ENCODE measurements at regions of chr4 and their contacts with region 1.

Region 1: DNA sequence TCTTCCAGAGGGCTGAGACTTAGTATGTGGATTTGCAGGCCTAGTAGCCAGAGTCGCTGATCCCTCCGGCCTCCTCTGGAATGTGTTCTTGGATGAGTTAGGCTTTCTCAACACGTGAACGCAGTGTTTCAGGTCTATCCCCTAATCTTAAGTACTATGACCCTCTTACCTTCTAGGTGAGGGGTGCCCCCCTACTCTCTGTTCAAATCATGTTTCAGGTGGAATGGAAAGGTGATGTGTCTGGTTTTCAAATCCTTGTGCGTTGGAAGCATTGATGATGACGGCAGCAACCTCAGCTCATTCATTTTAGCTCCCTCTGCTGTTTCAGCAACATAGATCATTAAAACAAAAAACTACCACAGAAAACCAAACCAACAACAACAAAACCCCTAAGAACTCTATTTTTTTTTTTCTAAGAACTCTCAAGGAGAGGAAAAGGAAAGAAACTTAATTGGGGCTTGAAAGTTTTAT is 56.4 kb downstream of the RWDD4 start:
- DNase-seq: no peak
- H3K4me3 Mint-ChIP-seq: no peak overlapping the region
- H3K27ac Mint-ChIP-seq: no peak overlapping the region
- H3K4me1 Mint-ChIP-seq: no peaks in the 10 kb centered on the region
- H3K27me3 Mint-ChIP-seq: peaks cover 4% of the 10 kb centered on the region

Region 2: DNA sequence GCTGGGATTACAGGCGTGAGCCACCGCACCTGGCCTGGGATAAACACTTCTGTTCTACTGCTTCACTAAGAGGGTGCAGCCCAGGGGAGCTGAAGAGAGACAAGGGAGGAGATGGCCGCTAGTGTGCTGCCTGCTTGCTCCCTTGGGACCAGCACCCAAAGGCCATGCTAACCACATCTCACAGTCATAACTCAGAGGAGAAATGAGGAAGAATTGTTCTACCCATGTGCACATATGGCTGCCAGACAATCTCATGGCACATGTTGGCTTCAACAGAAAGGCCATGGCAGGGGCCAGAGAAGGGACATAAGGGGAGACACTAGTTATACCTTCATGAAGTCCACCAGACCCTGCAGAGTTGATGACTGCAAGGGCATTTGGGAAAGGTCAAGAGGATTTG is 304.9 kb before region 1 on chr4:
- CTCF ChIA-PET with region 1: no interaction called
- POLR2A ChIA-PET with region 1: no interaction called
- DNase-seq: no peak
- H3K4me3 Mint-ChIP-seq: no peak overlapping the region
- H3K27ac Mint-ChIP-seq: no peak overlapping the region
- H3K4me1 Mint-ChIP-seq: peaks cover 9% of the 10 kb centered on the region
- H3K27me3 Mint-ChIP-seq: no peaks in the 10 kb centered on the region

Region 3: GRCh38 chr4:183469936-183470335 is 132.7 kb before region 1 on chr4:
- CTCF ChIA-PET with region 1: interaction called, 12 read pairs
- POLR2A ChIA-PET with region 1: no interaction called
- DNase-seq: no peak
- H3K4me3 Mint-ChIP-seq: no peak overlapping the region
- H3K27ac Mint-ChIP-seq: no peak overlapping the region
- H3K4me1 Mint-ChIP-seq: no peaks in the 10 kb centered on the region
- H3K27me3 Mint-ChIP-seq: no peaks in the 10 kb centered on the region

Region 4: DNA sequence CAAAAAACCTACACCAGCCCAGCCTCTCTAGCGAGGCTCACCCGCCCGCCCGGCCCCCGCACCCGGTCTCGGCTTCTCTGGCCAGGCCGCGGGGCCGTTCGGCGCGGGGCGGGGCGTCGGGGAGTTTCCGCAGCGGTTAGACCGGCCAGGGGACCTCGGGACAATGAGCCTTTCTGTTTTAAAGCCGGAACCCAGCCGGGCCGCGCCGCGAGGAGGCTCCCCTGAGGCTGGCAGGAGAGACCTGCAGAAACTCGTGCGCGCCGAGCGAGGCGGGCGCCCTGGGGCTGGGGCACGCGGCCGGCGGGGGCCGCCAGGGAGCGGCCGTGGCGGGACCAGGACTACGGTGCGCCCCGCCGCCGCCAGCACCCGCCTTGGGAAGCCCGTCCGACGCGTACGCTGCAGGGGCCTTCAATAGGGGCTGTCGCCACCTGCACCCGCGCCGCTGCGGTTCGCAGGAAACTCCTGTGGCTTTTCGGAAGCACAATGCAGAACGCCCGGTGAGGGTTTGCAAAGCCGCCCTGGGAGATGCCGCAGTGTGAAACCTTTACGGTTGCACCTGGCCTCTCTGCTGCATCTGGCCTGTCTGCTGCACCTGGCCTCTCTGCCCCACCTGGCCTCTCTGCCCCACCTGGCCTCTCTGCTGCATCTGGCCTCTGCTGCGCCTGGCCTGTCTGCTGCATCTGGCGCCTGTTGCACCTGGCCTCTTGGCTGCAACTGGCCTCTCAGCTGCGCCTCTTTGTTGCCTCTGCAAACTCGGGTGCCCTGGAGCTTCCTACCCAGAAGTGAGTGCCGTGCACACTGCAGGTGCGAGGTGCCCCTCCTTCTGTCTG is 120.4 kb after region 1 on chr4:
- CTCF ChIA-PET with region 1: no interaction called
- POLR2A ChIA-PET with region 1: no interaction called
- DNase-seq: peak; percentile 59
- H3K4me3 Mint-ChIP-seq: peak overlapping the region; percentile 72
- H3K27ac Mint-ChIP-seq: peak overlapping the region; percentile 44
- H3K4me1 Mint-ChIP-seq: peaks cover 14% of the 10 kb centered on the region
- H3K27me3 Mint-ChIP-seq: peaks cover 19% of the 10 kb centered on the region